Dorsolateral prefrontal cortex (tissue), 120 donors: ENCODE measurements at regions of chr1 and their contacts with region 1.

Region 1: GRCh38 chr1:231534703-231535159 is 6.3 kb downstream of the TSNAX start:
- DNase-seq: no peak
- H3K4me3 ChIP-seq: peak overlapping the region in 1 of 59 donors; percentile 15
- H3K27ac ChIP-seq: peak overlapping the region in 2 of 59 donors; percentile 11 to 19
- H3K27me3 ChIP-seq: no peaks in the 10 kb centered on the region
- CTCF ChIP-seq: no peak

Region 2: DNA sequence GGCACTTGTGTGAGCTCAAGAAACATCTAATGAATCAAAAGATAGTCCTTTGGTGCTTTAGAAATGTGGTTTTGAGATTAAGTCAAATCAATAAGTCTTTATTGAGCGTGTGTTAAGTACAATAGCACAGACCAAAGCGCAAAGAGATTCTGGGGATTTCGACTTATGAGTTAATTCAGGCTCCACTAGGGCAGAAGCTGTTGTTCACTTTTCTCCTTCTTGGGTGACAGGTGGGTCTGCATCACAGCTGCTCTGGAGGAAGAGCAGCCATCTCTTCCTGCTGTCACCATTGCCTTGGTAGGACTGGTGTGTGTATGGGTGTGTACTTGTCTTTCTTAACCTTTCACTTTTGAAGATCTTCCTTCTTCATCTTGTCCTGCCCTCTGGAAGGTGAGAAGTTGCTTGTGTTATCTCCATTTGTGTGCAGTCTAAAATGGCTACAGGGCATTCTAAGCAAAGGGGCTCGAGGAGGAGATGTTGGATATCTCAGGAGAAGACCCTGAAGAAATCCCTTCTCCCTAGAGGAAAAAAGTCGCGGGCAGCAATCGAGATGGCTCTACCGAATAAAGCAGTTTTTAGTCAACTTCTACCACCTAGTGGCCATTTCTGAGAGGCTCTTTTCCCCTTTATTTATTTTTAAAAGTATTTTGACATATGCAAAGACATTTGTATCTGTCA is 69.0 kb after region 1 on chr1:
- intact Hi-C with region 1: loop called in 1 of 2 experiments (anchors 5 kb)
- DNase-seq: peak in 3 of 10 donors; percentile 17 to 26 (median 22)
- H3K4me3 ChIP-seq: peak overlapping the region; percentile 21 to 72 (median 52)
- H3K27ac ChIP-seq: peak overlapping the region in 11 of 59 donors; percentile 12 to 58 (median 39)
- H3K27me3 ChIP-seq: no peaks in the 10 kb centered on the region
- CTCF ChIP-seq: peak; percentile 63 to 98 (median 86)